Activated CD4-positive, alpha-beta T cell treated with anti-CD3 and anti-CD28 coated beads, Interleukin-2, amount 10 ng/mL, durations not matched to agents 7 days and 5 days (primary cell): ENCODE measurements at regions of chr4 and their contacts with region 1.

Region 1: GRCh38 chr4:6826781-6827508 is 44.4 kb downstream of the KIAA0232 start:
- DNase-seq: no peak
- H3K4me3 Mint-ChIP-seq: no peak overlapping the region
- H3K27ac Mint-ChIP-seq: no peak overlapping the region
- H3K4me1 Mint-ChIP-seq: peaks cover 9% of the 10 kb centered on the region
- H3K27me3 Mint-ChIP-seq: no peaks in the 10 kb centered on the region

Region 2: DNA sequence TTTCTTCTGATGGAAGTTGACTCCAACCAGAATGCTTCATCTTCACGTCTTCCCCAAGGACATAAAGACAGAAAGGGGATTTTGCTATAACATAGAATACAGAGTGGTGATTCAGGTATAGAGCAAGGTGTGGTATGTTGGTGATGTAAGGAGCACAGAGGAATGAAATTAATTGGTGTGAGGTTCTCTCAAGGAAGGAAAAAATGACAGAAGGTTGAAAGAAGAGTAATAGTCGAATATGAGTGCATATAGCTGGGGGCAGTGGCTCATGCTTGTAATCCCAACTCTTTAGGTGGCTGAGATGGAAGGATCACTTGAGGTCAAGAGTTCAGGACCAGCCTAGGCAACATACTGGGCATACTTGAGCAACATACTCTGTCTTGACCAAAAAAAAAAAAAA is 24.3 kb before region 1 on chr4:
- CTCF ChIA-PET with region 1: no interaction called
- POLR2A ChIA-PET with region 1: interaction called, 16 read pairs
- DNase-seq: no peak
- H3K4me3 Mint-ChIP-seq: no peak overlapping the region
- H3K27ac Mint-ChIP-seq: no peak overlapping the region
- H3K4me1 Mint-ChIP-seq: peaks cover 17% of the 10 kb centered on the region
- H3K27me3 Mint-ChIP-seq: no peaks in the 10 kb centered on the region